ENCODE measurements at regions of chr3 and their contacts with region 1.

Region 1: DNA sequence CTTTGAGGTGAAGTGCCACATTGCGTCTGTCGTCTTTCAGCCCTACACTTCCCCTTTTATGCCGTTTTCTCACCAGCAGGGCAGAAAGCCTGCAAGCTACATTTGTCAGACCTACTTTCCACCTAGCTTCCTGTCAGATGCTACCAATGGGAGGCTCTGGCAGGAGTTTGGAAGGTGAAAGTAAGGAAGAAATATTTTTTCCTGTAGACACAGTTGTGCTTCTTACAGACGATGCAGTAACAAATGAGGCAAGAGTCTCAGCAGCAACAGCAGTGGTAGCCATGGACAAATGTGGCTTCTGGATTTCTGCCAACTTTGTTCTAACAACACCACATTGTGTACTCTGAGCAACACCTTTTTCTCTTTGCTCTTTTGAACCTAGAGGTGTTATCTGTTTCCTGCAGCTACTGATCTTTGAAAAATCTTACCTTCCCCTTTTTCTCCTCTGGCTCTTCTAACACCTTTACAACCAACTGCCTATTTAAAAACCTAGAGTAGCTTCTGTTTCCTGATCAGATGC is 70.6 kb upstream of the STT3B start:
- DNase-seq: peak in 1 of 2 donors; percentile 91
- ATAC-seq: peak; percentile 80 to 92 (median 86)
- H3K4me3 ChIP-seq: no peak overlapping the region
- H3K4me3 Mint-ChIP-seq: peak overlapping the region; percentile 42
- H3K27ac ChIP-seq: peak overlapping the region; percentile 63
- H3K27ac Mint-ChIP-seq: peak overlapping the region; percentile 52 to 75
- H3K4me1 ChIP-seq: peaks cover 29% of the 10 kb centered on the region
- H3K4me1 Mint-ChIP-seq: peaks cover 29 to 32% of the 10 kb centered on the region in 2 donors
- H3K27me3 ChIP-seq: no peaks in the 10 kb centered on the region
- H3K27me3 Mint-ChIP-seq: no peaks in the 10 kb centered on the region
- CTCF ChIP-seq: no peak

Region 2: DNA sequence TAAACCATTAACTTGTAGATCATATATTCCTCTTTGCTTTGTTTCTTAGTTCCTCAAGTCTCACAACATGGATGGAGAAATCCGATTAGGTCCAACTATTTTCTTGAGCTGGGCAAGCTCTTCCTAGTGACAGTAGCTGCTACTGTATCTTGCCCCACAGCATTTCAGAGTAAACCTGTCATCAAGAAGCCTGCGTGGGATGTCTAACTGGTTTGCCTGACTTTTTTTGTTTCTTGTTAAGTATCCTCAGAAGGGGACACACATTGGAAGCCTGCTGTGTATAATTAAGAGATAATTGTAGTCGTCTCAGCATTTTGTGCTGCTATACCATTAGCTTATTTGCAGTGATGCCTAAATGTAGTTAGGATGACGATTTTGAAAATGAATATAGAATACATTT is 41.3 kb after region 1 on chr3:
- intact Hi-C with region 1: loop called (anchors 5 kb)
- DNase-seq: no peak
- ATAC-seq: no peak
- H3K4me3 ChIP-seq: no peak overlapping the region
- H3K4me3 Mint-ChIP-seq: peak overlapping the region; percentile 69
- H3K27ac ChIP-seq: no peak overlapping the region
- H3K27ac Mint-ChIP-seq: peak overlapping the region in 1 of 2 donors; percentile 58
- H3K4me1 ChIP-seq: peaks cover 16% of the 10 kb centered on the region
- H3K4me1 Mint-ChIP-seq: peaks cover 28 to 45% of the 10 kb centered on the region in 2 donors
- H3K27me3 ChIP-seq: peaks cover 4% of the 10 kb centered on the region
- H3K27me3 Mint-ChIP-seq: peaks cover 18 to 19% of the 10 kb centered on the region in 2 donors
- CTCF ChIP-seq: no peak

Region 3: DNA sequence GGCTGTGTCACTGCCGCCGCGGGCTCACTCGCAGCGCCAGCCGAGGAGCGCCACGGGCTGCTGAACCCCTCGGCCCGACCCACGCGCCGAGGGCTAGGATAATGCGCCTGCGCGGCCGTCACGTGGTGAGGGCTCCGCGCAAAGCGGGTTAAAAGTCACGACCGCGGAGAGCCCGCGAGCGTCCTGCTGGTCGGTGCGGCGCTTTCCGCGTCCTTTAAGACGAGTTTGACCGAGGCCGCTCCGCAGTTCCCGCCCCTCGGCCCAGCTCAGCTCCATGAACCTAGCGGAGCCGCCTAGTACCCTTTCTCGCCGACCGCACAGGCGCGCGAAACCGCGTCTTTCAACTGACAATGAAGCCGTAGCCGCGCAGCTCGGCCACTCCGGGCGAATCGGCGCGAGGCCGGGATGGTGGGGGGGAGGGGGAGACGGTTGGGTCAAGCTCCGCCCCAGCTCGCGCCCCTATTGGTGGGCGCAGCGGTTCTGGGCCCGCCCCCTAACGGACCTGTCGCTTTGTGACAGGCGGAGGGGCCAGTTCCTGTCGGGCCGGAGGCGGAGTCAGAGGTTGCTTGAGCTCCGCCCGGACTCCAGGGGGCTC is 70.0 kb after region 1 on chr3:
- intact Hi-C with region 1: loop called (anchors 1 kb)
- DNase-seq: peak; percentile 97 to 99
- ATAC-seq: peak; percentile 84 to 95 (median 85)
- H3K4me3 ChIP-seq: peak overlapping the region; percentile 97
- H3K4me3 Mint-ChIP-seq: peak overlapping the region; percentile 99
- H3K27ac ChIP-seq: peak overlapping the region; percentile 96
- H3K27ac Mint-ChIP-seq: peak overlapping the region; percentile 94 to 99
- H3K4me1 ChIP-seq: peaks cover 6% of the 10 kb centered on the region
- H3K4me1 Mint-ChIP-seq: peaks cover 30 to 33% of the 10 kb centered on the region in 2 donors
- H3K27me3 ChIP-seq: no peaks in the 10 kb centered on the region
- H3K27me3 Mint-ChIP-seq: no peaks in the 10 kb centered on the region
- CTCF ChIP-seq: no peak